Activated CD4-positive, alpha-beta T cell treated with anti-CD3 and anti-CD28 coated beads for 36 hours (primary cell): ENCODE measurements at regions of chr1 and their contacts with region 1.

Region 1: GRCh38 chr1:165914136-165914798 is 86.9 kb downstream of the UCK2 start:
- DNase-seq: peak; percentile 74
- ATAC-seq: peak; percentile 88
- H3K4me3 Mint-ChIP-seq: no peak overlapping the region
- H3K27ac Mint-ChIP-seq: no peak overlapping the region
- H3K4me1 Mint-ChIP-seq: peaks cover 2% of the 10 kb centered on the region
- H3K27me3 Mint-ChIP-seq: no peaks in the 10 kb centered on the region

Region 2: GRCh38 chr1:165392634-165393571 is 521.4 kb before region 1 on chr1:
- CTCF ChIA-PET with region 1: interaction called, 3 read pairs
- POLR2A ChIA-PET with region 1: no interaction called
- intact Hi-C with region 1: loop called (anchors 1 to 2 kb)
- DNase-seq: peak; percentile 93
- ATAC-seq: peak; percentile 95
- H3K4me3 Mint-ChIP-seq: peak overlapping the region; percentile 62
- H3K27ac Mint-ChIP-seq: peak overlapping the region; percentile 43
- H3K4me1 Mint-ChIP-seq: peaks cover 15% of the 10 kb centered on the region
- H3K27me3 Mint-ChIP-seq: peaks cover 67% of the 10 kb centered on the region

Region 3: DNA sequence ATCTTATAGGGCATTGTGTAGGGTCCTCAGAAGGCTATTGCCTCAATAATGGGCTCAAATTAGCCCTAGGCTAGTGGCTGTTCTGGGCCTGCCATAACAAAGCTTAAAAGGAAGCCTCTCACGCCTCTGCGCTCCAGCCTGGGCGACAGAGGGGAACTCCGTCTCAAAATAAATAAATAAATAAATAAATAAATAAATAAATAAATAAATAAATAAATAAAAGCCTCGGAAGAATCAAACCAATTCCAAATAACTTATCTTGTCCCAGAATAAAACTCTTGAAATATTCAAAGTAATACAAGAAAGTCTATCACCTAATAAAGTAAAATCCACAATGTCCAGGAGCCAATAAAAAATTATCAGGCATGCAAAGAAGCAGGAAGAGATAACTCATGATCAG is 201.5 kb before region 1 on chr1:
- CTCF ChIA-PET with region 1: interaction called, 15 read pairs
- POLR2A ChIA-PET with region 1: no interaction called
- intact Hi-C with region 1: no loop called
- DNase-seq: no peak
- ATAC-seq: no peak
- H3K4me3 Mint-ChIP-seq: no peak overlapping the region
- H3K27ac Mint-ChIP-seq: no peak overlapping the region
- H3K4me1 Mint-ChIP-seq: no peaks in the 10 kb centered on the region
- H3K27me3 Mint-ChIP-seq: peaks cover 10% of the 10 kb centered on the region

Region 4: GRCh38 chr1:165768513-165769394 is 145.5 kb before region 1 on chr1 and contains the start of gene TMCO1:
- CTCF ChIA-PET with region 1: interaction called, 10 read pairs
- POLR2A ChIA-PET with region 1: no interaction called
- intact Hi-C with region 1: loop called (anchors 2 to 5 kb)
- DNase-seq: peak; percentile 96
- ATAC-seq: peak; percentile 99
- H3K4me3 Mint-ChIP-seq: peak within 1 kb of the TSS; percentile 92
- H3K27ac Mint-ChIP-seq: peak within 1 kb of the TSS; percentile 99
- H3K4me1 Mint-ChIP-seq: peaks cover 54% of the 10 kb centered on the region
- H3K27me3 Mint-ChIP-seq: no peaks in the 10 kb centered on the region
- total RNA-seq, gene TMCO1: 57.7 to 70.5 TPM

Region 5: GRCh38 chr1:165862448-165862847 is 51.8 kb before region 1 on chr1:
- CTCF ChIA-PET with region 1: no interaction called
- POLR2A ChIA-PET with region 1: no interaction called
- intact Hi-C with region 1: loop called in 1 of 2 experiments (anchors 5 kb)
- DNase-seq: no peak
- ATAC-seq: no peak
- H3K4me3 Mint-ChIP-seq: no peak overlapping the region
- H3K27ac Mint-ChIP-seq: no peak overlapping the region
- H3K4me1 Mint-ChIP-seq: peaks cover 13% of the 10 kb centered on the region
- H3K27me3 Mint-ChIP-seq: no peaks in the 10 kb centered on the region